Mucosa of descending colon (tissue), 3 donors: ENCODE measurements at regions of chr16 and their contacts with region 1.

Region 1: GRCh38 chr16:87877938-87878507 is 8.7 kb upstream of the SLC7A5 start:
- DNase-seq: peak in 1 of 3 donors; percentile 43
- ATAC-seq: peak; percentile 14
- H3K4me3 ChIP-seq: no peak overlapping the region
- H3K4me1 ChIP-seq: no peaks in the 10 kb centered on the region
- CTCF ChIP-seq: no peak

Region 2: DNA sequence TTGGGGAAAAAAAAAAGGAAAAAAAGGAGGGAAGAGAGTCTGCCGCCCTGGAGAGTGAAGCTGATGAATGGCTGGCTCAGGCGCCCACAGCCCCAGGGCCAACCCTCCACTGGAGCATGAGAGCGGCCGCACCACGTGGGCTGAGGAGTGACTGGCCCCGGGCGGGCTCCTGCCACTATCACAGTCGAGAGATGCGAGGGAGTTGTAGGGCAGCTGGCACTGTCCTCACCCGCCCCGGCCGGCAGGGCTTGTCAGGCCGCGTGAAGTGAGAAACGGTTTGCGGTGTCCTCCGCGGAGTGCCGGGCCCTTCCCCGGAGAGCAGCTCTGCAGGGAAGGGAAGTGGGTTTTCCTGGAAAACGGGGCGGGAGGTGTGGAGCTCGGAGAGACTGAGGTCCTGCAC is 229.8 kb before region 1 on chr16:
- intact Hi-C with region 1: no loop called
- DNase-seq: no peak
- ATAC-seq: no peak
- H3K4me3 ChIP-seq: no peak overlapping the region
- H3K4me1 ChIP-seq: no peaks in the 10 kb centered on the region
- CTCF ChIP-seq: no peak

Region 3: GRCh38 chr16:87778830-87779579 is 99.0 kb before region 1 on chr16:
- intact Hi-C with region 1: loop called in 1 of 2 experiments (anchors 2 kb)
- DNase-seq: peak; percentile 92 to 93 (median 92)
- ATAC-seq: peak; percentile 94
- H3K4me3 ChIP-seq: no peak overlapping the region
- H3K4me1 ChIP-seq: peaks cover 16% of the 10 kb centered on the region
- CTCF ChIP-seq: peak; percentile 92